IMR-90 (cell line): ENCODE measurements at regions of chr4 and their contacts with region 1.

Region 1: DNA sequence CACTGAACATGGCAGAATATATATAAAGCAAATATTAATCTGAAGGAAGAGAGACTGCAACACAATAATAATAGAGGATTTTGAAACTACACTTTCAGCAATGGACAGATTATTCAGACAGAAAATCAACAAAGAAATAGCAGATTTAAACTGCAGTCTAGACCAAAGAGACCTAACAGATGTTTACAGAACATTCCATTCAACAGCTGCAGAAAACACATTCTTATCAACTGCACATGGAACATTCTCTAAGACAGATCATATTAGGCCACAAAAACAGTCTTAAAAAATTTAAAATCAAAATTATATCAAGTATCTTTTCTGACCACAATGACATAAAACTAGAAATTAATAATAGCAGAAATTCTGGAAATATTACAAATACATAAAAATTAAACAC is 27.1 kb downstream of the CENPE start:
- DNase-seq: no peak
- ATAC-seq: no peak; the same call in 1 of the 2 replicates
- H3K4me3 ChIP-seq: no peak overlapping the region
- H3K27ac ChIP-seq: no peak overlapping the region
- H3K4me1 ChIP-seq: no peaks in the 10 kb centered on the region
- H3K27me3 ChIP-seq: no peaks in the 10 kb centered on the region
- CTCF ChIP-seq: no peak
- POLR2A ChIP-seq: no peak
- RAD21 ChIP-seq: no peak

Region 2: GRCh38 chr4:102420569-102421221 is 750.3 kb before region 1 on chr4:
- CTCF ChIA-PET with region 1: no interaction called
- POLR2A ChIA-PET with region 1: no interaction called
- dilution Hi-C with region 1: no loop called
- in situ Hi-C with region 1: no loop called
- intact Hi-C with region 1: loop called (anchors 10 kb)
- DNase-seq: peak; percentile 26
- ATAC-seq: no peak
- H3K4me3 ChIP-seq: no peak overlapping the region
- H3K27ac ChIP-seq: no peak overlapping the region
- H3K4me1 ChIP-seq: no peaks in the 10 kb centered on the region
- H3K27me3 ChIP-seq: peaks cover 2% of the 10 kb centered on the region
- CTCF ChIP-seq: peak; percentile 34
- POLR2A ChIP-seq: no peak
- RAD21 ChIP-seq: peak; percentile 31; the same call in 1 of the 2 replicates